ENCODE measurements at regions of chr19 and their contacts with region 1.

Region 1: DNA sequence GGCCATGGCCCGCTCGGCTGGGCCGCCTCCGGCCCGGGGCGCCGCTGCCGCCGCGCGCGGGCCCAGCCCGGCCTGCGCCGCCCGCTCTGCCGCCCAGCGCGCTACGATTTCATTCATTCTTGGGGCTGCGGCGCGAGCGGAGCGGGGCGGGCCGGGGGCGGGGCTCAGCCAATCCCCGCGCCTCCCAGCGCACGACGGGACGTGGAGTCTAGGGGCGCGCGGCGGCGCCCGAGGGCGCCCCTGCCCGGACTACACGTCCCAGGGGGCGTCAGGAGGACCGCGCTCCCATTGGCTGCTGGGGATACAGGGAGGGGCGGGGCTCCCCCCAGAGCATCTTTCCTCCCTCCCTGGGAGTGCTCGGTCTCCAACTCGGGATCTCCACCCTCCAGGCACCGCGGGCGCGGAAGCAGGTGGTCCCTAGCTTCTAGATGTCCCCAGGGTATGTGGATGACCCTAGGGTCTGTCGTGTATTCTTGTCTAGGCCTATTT is 5.6 kb upstream of the DPF1 start:
- DNase-seq: peak; percentile 45 to 61 (median 52)
- H3K4me3 ChIP-seq: no peak overlapping the region
- H3K4me3 Mint-ChIP-seq: peak overlapping the region in 7 of 8 donors; percentile 40 to 73 (median 62)
- H3K27ac ChIP-seq: no peak overlapping the region
- H3K27ac Mint-ChIP-seq: peak overlapping the region in 3 of 7 donors; percentile 44 to 75 (median 47)
- H3K4me1 ChIP-seq: peaks cover 8% of the 10 kb centered on the region
- H3K4me1 Mint-ChIP-seq: peaks cover 3 to 14% (median 8%) of the 10 kb centered on the region in 4 donors
- H3K27me3 ChIP-seq: peaks cover 30% of the 10 kb centered on the region
- H3K27me3 Mint-ChIP-seq: peaks cover 31 to 32% of the 10 kb centered on the region in 2 donors

Region 2: GRCh38 chr19:38245826-38246498 is 16.3 kb after region 1 on chr19:
- CTCF ChIA-PET with region 1: interaction called, 25 read pairs
- POLR2A ChIA-PET with region 1: no interaction called
- intact Hi-C with region 1: no loop called
- DNase-seq: no peak
- H3K4me3 ChIP-seq: no peak overlapping the region
- H3K4me3 Mint-ChIP-seq: no peak overlapping the region
- H3K27ac ChIP-seq: no peak overlapping the region
- H3K27ac Mint-ChIP-seq: no peak overlapping the region
- H3K4me1 ChIP-seq: no peaks in the 10 kb centered on the region
- H3K4me1 Mint-ChIP-seq: peaks cover 2 to 5% (median 3%) of the 10 kb centered on the region in 4 donors
- H3K27me3 ChIP-seq: no peaks in the 10 kb centered on the region
- H3K27me3 Mint-ChIP-seq: peaks cover 0 to 4% of the 10 kb centered on the region in 2 donors